ENCODE measurements at regions of chr17 and their contacts with region 1.

Region 1: DNA sequence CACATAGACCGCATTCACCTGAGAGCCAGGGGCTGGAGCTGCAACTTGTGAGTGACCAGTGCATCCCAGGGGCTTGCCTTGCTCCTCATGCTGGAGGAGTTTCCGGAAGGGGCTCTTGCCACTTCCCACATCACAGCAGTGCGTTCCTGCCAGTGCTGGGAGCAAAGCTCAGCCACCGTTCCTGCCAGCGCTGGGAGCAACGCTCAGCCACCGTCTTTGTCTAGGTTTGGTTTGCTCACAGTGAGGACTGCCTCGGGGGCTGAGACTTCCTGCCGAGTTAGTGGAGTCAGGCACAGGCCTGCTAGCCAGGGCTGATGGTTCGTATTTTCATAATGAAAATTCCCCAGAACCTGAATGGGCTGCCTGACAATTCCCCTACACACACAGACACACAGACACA is 5.4 kb upstream of the CHRNE start:
- DNase-seq: no peak
- H3K4me3 ChIP-seq: no peak overlapping the region
- H3K27ac ChIP-seq: no peak overlapping the region
- H3K4me1 ChIP-seq: peaks cover 2 to 12% (median 4%) of the 10 kb centered on the region in 4 experiments; a peak in 6 of 7 replicates
- H3K27me3 ChIP-seq: no peaks in the 10 kb centered on the region
- CTCF ChIP-seq: no peak
- EP300 ChIP-seq: no peak
- POLR2A ChIP-seq: no peak
- RAD21 ChIP-seq: no peak

Region 2: DNA sequence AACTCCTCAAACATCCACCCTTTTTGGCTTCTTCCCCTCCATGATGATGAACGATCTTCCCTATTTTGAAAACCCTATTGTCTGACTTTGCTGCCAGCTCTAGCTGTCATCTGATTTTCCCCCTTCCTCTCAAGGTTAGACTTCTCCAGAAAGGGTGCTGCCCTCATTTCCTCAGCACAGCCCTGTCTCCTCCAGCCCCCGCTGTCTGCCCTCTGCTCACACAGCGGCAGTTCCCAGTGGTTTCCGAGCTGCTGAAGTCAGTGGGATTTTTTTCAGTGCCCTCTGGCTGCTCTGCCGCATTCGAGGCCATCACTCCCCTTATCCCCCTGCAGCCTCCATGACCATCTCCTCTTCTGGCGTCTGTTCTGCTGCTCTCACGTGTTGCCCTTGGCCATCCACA is 35.5 kb before region 1 on chr17:
- CTCF ChIA-PET with region 1: no interaction called
- POLR2A ChIA-PET with region 1: no interaction called
- DNase-seq: no peak
- H3K4me3 ChIP-seq: no peak overlapping the region
- H3K27ac ChIP-seq: no peak overlapping the region
- H3K4me1 ChIP-seq: peaks cover 0 to 7% (median 4%) of the 10 kb centered on the region in 4 experiments; a peak in 6 of 7 replicates
- H3K27me3 ChIP-seq: no peaks in the 10 kb centered on the region
- CTCF ChIP-seq: no peak
- EP300 ChIP-seq: no peak
- POLR2A ChIP-seq: no peak
- RAD21 ChIP-seq: no peak

Region 3: GRCh38 chr17:4920351-4921048 is 12.2 kb after region 1 on chr17:
- CTCF ChIA-PET with region 1: interaction called, 33 read pairs
- POLR2A ChIA-PET with region 1: interaction called, 55 read pairs
- DNase-seq: no peak
- H3K4me3 ChIP-seq: no peak overlapping the region
- H3K27ac ChIP-seq: no peak overlapping the region
- H3K4me1 ChIP-seq: peaks cover 0 to 5% (median 1%) of the 10 kb centered on the region in 4 experiments; a peak in 2 of 7 replicates
- H3K27me3 ChIP-seq: no peaks in the 10 kb centered on the region
- CTCF ChIP-seq: no peak
- EP300 ChIP-seq: no peak
- POLR2A ChIP-seq: no peak
- RAD21 ChIP-seq: no peak

Region 4: GRCh38 chr17:4934173-4934979 is 26.1 kb after region 1 on chr17:
- CTCF ChIA-PET with region 1: interaction called, 26 read pairs
- POLR2A ChIA-PET with region 1: interaction called, 55 read pairs
- DNase-seq: no peak
- H3K4me3 ChIP-seq: no peak overlapping the region
- H3K27ac ChIP-seq: no peak overlapping the region
- H3K4me1 ChIP-seq: peaks cover 0 to 8% (median 6%) of the 10 kb centered on the region in 4 experiments; a peak in 6 of 7 replicates
- H3K27me3 ChIP-seq: no peaks in the 10 kb centered on the region
- CTCF ChIP-seq: peak; percentile 15 to 55 (median 51)
- EP300 ChIP-seq: no peak
- POLR2A ChIP-seq: no peak
- RAD21 ChIP-seq: peak; percentile 25 to 52; a peak in 3 of 4 replicates

Region 5: DNA sequence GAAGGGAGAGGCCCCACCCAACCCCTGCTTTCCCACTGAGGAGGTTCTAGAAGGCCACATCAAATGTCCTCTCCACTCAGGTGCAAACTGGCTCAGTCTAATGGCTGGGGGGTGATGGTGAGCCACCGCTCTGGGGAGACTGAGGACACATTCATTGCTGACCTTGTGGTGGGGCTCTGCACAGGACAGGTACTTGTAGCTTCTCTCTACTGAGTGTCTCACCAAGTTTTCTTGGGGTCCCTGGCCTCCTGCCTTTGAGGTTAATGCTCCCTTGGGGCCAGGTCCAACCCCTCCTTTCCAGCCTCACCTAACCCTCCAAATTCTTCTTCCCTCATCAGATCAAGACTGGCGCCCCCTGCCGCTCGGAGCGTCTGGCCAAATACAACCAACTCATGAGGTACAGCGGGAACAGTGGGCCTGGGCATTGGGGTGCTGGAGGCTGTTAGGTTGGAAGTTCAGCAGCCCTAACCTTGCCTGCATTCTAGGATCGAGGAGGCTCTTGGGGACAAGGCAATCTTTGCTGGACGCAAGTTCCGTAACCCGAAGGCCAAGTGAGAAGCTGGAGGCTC is 48.3 kb after region 1 on chr17:
- CTCF ChIA-PET with region 1: interaction called, 20 read pairs
- POLR2A ChIA-PET with region 1: interaction called, 5 read pairs
- DNase-seq: peak in 1 of 2 experiments; percentile 93
- H3K4me3 ChIP-seq: no peak overlapping the region
- H3K27ac ChIP-seq: no peak overlapping the region
- H3K4me1 ChIP-seq: peaks cover 0 to 14% (median 8%) of the 10 kb centered on the region in 4 experiments; a peak in 5 of 7 replicates
- H3K27me3 ChIP-seq: no peaks in the 10 kb centered on the region
- CTCF ChIP-seq: peak; percentile 59 to 74 (median 71)
- EP300 ChIP-seq: no peak
- POLR2A ChIP-seq: no peak
- RAD21 ChIP-seq: peak; percentile 25 to 46; a peak in 3 of 4 replicates

Region 6: GRCh38 chr17:4986951-4987766 is 78.9 kb after region 1 on chr17 and contains the start of gene CAMTA2:
- CTCF ChIA-PET with region 1: interaction called, 11 read pairs
- POLR2A ChIA-PET with region 1: no interaction called
- DNase-seq: peak in 1 of 2 experiments; percentile 93
- H3K4me3 ChIP-seq: peak within 1 kb of the TSS; percentile 59 to 85 (median 66)
- H3K27ac ChIP-seq: no peak within 1 kb of the TSS
- H3K4me1 ChIP-seq: peaks cover 0 to 7% (median 4%) of the 10 kb centered on the region in 4 experiments; a peak in 5 of 7 replicates
- H3K27me3 ChIP-seq: peaks cover 0 to 11% (median 9%) of the 10 kb centered on the region in 4 experiments; a peak in 6 of 7 replicates
- CTCF ChIP-seq: peak; percentile 40 to 52 (median 47)
- EP300 ChIP-seq: peak in 1 of 2 experiments; percentile 29; a peak in 1 of 3 replicates
- POLR2A ChIP-seq: no peak
- RAD21 ChIP-seq: peak in 1 of 2 experiments; percentile 27; a peak in 1 of 4 replicates
- total RNA-seq, gene CAMTA2: 11.4 and 12.0 TPM in 2 replicates

Region 7: GRCh38 chr17:5078106-5079028 is 170.1 kb after region 1 on chr17 and contains the start of gene ZFP3:
- CTCF ChIA-PET with region 1: no interaction called
- POLR2A ChIA-PET with region 1: no interaction called
- DNase-seq: peak; percentile 10 to 61
- H3K4me3 ChIP-seq: peak within 1 kb of the TSS; percentile 14 to 53 (median 26); a peak in 7 of 8 replicates
- H3K27ac ChIP-seq: no peak within 1 kb of the TSS
- H3K4me1 ChIP-seq: no peaks in the 10 kb centered on the region; a peak in 1 of 7 replicates
- H3K27me3 ChIP-seq: peaks cover 0 to 13% (median 8%) of the 10 kb centered on the region in 4 experiments; a peak in 5 of 7 replicates
- CTCF ChIP-seq: peak in 1 of 3 experiments; percentile 14; a peak in 1 of 4 replicates
- EP300 ChIP-seq: no peak
- POLR2A ChIP-seq: no peak
- RAD21 ChIP-seq: no peak
- total RNA-seq, gene ZFP3: 0.15 and 0.17 TPM in 2 replicates